Naive thymus-derived CD4-positive, alpha-beta T cell (primary cell): ENCODE measurements at regions of chr11 and their contacts with region 1.

Region 1: DNA sequence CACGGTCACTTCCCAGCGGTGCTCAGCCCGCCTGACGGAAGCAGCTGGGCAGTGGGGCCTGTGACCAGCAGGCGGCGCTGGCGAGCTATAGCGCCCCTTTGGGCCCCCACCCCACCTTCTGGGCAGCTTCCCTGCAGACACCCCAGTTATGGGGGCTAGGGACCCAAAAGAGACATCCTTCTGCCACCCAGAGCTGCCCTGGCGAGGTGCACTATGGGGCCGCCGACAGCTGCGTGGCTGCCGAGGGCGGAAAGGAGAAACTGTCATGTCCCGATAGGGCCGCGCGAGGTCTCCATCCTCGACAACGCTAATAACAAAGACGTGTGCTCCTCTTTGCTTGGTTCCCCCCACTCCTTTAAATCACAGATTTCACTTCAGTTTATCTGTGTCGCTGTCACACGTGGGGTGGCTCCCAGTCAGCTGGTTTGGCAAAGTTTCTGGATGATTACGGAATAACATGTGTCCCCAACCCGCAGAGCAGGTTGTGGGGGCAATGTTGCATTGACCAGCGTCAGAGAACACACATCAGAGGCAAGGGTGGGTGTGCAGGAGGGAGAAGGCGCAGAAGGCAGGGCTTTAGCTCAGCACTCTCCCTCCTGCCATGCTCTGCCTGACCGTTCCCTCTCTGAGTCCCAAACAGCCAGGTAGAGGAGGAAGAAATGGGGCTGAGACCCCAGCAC is 674 bp upstream of the MYO7A start:
- DNase-seq: peak; percentile 25 to 75 (median 59)
- ATAC-seq: peak; percentile 76
- H3K4me3 ChIP-seq: peak overlapping the region; percentile 40
- H3K4me3 Mint-ChIP-seq: peak overlapping the region; percentile 54 to 76 (median 69)
- H3K27ac ChIP-seq: no peak overlapping the region
- H3K27ac Mint-ChIP-seq: peak overlapping the region in 1 of 9 donors; percentile 88
- H3K4me1 ChIP-seq: peaks cover 3 to 11% of the 10 kb centered on the region in 2 donors
- H3K4me1 Mint-ChIP-seq: peaks cover 0 to 15% (median 6%) of the 10 kb centered on the region in 7 donors
- H3K27me3 ChIP-seq: no peaks in the 10 kb centered on the region
- H3K27me3 Mint-ChIP-seq: peaks cover 0 to 8% (median 0%) of the 10 kb centered on the region in 5 donors

Region 2: GRCh38 chr11:77187776-77188632 is 60.6 kb after region 1 on chr11:
- CTCF ChIA-PET with region 1: no interaction called
- POLR2A ChIA-PET with region 1: no interaction called
- intact Hi-C with region 1: loop called (anchors 1 kb)
- DNase-seq: peak in 8 of 9 donors; percentile 22 to 67 (median 40)
- ATAC-seq: peak; percentile 78
- H3K4me3 ChIP-seq: no peak overlapping the region
- H3K4me3 Mint-ChIP-seq: no peak overlapping the region
- H3K27ac ChIP-seq: no peak overlapping the region
- H3K27ac Mint-ChIP-seq: peak overlapping the region in 1 of 9 donors; percentile 11
- H3K4me1 ChIP-seq: no peaks in the 10 kb centered on the region
- H3K4me1 Mint-ChIP-seq: no peaks in the 10 kb centered on the region
- H3K27me3 ChIP-seq: no peaks in the 10 kb centered on the region
- H3K27me3 Mint-ChIP-seq: peaks cover 0 to 4% (median 0%) of the 10 kb centered on the region in 5 donors

Region 3: GRCh38 chr11:77619576-77620198 is 492.3 kb after region 1 on chr11:
- CTCF ChIA-PET with region 1: interaction called, 11 read pairs
- POLR2A ChIA-PET with region 1: no interaction called
- intact Hi-C with region 1: loop called in 1 of 2 experiments (anchors 5 kb)
- DNase-seq: peak in 7 of 9 donors; percentile 18 to 51 (median 41)
- ATAC-seq: peak; percentile 57
- H3K4me3 ChIP-seq: no peak overlapping the region
- H3K4me3 Mint-ChIP-seq: no peak overlapping the region
- H3K27ac ChIP-seq: no peak overlapping the region
- H3K27ac Mint-ChIP-seq: peak overlapping the region in 1 of 9 donors; percentile 75
- H3K4me1 ChIP-seq: no peaks in the 10 kb centered on the region
- H3K4me1 Mint-ChIP-seq: peaks cover 0 to 2% (median 0%) of the 10 kb centered on the region in 7 donors
- H3K27me3 ChIP-seq: no peaks in the 10 kb centered on the region
- H3K27me3 Mint-ChIP-seq: no peaks in the 10 kb centered on the region